IMR-90 (cell line): ENCODE measurements at regions of chr7 and their contacts with region 1.

Region 1: GRCh38 chr7:33109005-33109757 is at the start of gene RP9:
- DNase-seq: peak; percentile 47
- ATAC-seq: peak; percentile 95
- H3K4me3 ChIP-seq: peak within 1 kb of the TSS; percentile 92
- H3K27ac ChIP-seq: peak within 1 kb of the TSS; percentile 62
- H3K4me1 ChIP-seq: peaks cover 6% of the 10 kb centered on the region
- H3K27me3 ChIP-seq: peaks cover 6% of the 10 kb centered on the region; the same call in 1 of the 2 replicates
- CTCF ChIP-seq: peak; percentile 62
- POLR2A ChIP-seq: no peak
- RAD21 ChIP-seq: peak; percentile 29
- total RNA-seq, gene RP9: 9.5 and 14.7 TPM in 2 replicates

Region 2: GRCh38 chr7:32495298-32496176 is 613.6 kb before region 1 on chr7 and contains the start of gene AVL9:
- CTCF ChIA-PET with region 1: no interaction called
- POLR2A ChIA-PET with region 1: no interaction called
- dilution Hi-C with region 1: no loop called
- in situ Hi-C with region 1: no loop called
- intact Hi-C with region 1: loop called (anchors 2 kb)
- DNase-seq: peak; percentile 93
- ATAC-seq: peak; percentile 97
- H3K4me3 ChIP-seq: peak within 1 kb of the TSS; percentile 97
- H3K27ac ChIP-seq: peak within 1 kb of the TSS; percentile 98
- H3K4me1 ChIP-seq: peaks cover 2% of the 10 kb centered on the region; the same call in 1 of the 2 replicates
- H3K27me3 ChIP-seq: no peaks in the 10 kb centered on the region
- CTCF ChIP-seq: no peak
- POLR2A ChIP-seq: peak; percentile 90
- RAD21 ChIP-seq: no peak
- total RNA-seq, gene AVL9: 21.7 and 23.6 TPM in 2 replicates

Region 3: DNA sequence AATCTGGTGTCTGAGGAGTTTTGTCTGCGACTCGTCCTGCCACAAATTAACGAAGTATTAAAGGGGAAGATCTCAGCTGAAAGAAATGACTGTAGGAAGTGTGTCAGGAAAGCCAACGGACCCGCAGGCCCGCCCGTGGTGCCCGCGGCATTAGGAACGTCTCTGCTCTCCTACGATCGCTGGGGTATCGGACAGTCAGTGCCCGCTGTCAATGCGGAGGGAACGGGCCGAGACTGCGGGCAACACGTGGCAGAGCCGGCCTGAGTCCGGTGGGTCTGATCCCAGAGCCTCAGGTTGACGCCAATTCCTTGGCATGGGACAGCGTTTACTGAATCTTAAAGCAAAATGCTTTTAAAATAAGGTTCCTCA is 346.3 kb before region 1 on chr7:
- CTCF ChIA-PET with region 1: no interaction called
- POLR2A ChIA-PET with region 1: no interaction called
- dilution Hi-C with region 1: no loop called
- in situ Hi-C with region 1: no loop called
- intact Hi-C with region 1: loop called (anchors 2 kb)
- DNase-seq: no peak
- ATAC-seq: no peak
- H3K4me3 ChIP-seq: no peak overlapping the region
- H3K27ac ChIP-seq: no peak overlapping the region
- H3K4me1 ChIP-seq: no peaks in the 10 kb centered on the region; the same call in 1 of the 2 replicates
- H3K27me3 ChIP-seq: no peaks in the 10 kb centered on the region
- CTCF ChIP-seq: no peak
- POLR2A ChIP-seq: no peak
- RAD21 ChIP-seq: no peak

Region 4: GRCh38 chr7:32803406-32804141 is 305.6 kb before region 1 on chr7:
- CTCF ChIA-PET with region 1: interaction called, 4 read pairs
- POLR2A ChIA-PET with region 1: no interaction called
- dilution Hi-C with region 1: no loop called
- in situ Hi-C with region 1: no loop called
- intact Hi-C with region 1: loop called (anchors 1 kb)
- DNase-seq: no peak
- ATAC-seq: no peak
- H3K4me3 ChIP-seq: no peak overlapping the region
- H3K27ac ChIP-seq: no peak overlapping the region
- H3K4me1 ChIP-seq: no peaks in the 10 kb centered on the region
- H3K27me3 ChIP-seq: no peaks in the 10 kb centered on the region
- CTCF ChIP-seq: no peak
- POLR2A ChIP-seq: no peak
- RAD21 ChIP-seq: no peak

Region 5: GRCh38 chr7:32891800-32892520 is 217.2 kb before region 1 on chr7:
- CTCF ChIA-PET with region 1: interaction called, 4 read pairs
- POLR2A ChIA-PET with region 1: no interaction called
- dilution Hi-C with region 1: no loop called
- in situ Hi-C with region 1: no loop called
- intact Hi-C with region 1: loop called (anchors 5 kb)
- DNase-seq: peak; percentile 92
- ATAC-seq: peak; percentile 79
- H3K4me3 ChIP-seq: peak overlapping the region; percentile 86
- H3K27ac ChIP-seq: peak overlapping the region; percentile 99
- H3K4me1 ChIP-seq: peaks cover 2% of the 10 kb centered on the region; the same call in 1 of the 2 replicates
- H3K27me3 ChIP-seq: no peaks in the 10 kb centered on the region
- CTCF ChIP-seq: no peak
- POLR2A ChIP-seq: peak; percentile 39; the same call in 1 of the 2 replicates
- RAD21 ChIP-seq: no peak

Region 6: DNA sequence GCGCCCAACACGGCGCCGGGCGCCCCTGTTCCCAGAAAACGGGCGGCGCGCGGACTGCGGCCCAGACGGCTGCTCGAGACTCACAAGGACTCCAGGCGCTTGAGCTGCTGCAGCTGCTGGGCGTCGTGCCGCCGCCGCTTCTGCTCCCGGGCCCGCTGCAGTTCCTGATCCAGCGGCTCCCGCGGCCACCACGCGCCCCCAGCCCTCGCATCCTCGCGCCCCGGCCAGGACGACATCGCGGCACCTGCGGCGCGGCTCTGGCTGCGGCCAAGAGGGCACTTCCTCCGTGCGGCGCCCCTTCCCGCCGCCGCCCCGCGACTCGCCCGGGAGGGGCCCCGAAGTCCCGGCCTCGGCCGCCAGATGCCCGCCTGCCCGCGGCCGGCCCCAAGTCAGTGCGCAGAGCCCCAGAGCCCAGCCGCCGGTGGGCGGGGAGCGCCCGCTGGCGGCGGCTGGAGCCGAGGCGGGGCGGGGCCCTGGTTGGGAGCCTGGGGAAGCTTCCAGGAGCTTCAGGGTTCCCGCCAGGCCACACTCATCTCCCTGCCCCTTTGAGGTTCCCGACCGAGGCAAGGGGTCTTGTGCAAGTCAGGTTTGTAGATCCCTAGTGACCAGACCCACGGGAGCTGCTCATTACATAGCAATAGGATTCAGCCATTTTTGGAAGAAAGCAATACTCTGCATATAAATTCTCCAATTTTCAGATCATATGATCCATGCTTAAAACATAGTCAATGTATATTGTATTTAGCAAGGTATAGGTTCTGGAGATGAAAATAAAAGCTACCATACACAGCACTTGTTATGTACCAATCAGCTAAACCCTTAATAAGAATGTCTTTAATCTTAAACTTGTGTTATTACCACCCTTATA is 166.2 kb before region 1 on chr7:
- CTCF ChIA-PET with region 1: no interaction called
- POLR2A ChIA-PET with region 1: no interaction called
- dilution Hi-C with region 1: no loop called
- in situ Hi-C with region 1: no loop called
- intact Hi-C with region 1: loop called (anchors 5 kb)
- DNase-seq: peak; percentile 71
- ATAC-seq: peak; percentile 97
- H3K4me3 ChIP-seq: peak overlapping the region; percentile 94
- H3K27ac ChIP-seq: peak overlapping the region; percentile 95
- H3K4me1 ChIP-seq: peaks cover under 1% of the 10 kb centered on the region; the same call in 1 of the 2 replicates
- H3K27me3 ChIP-seq: no peaks in the 10 kb centered on the region
- CTCF ChIP-seq: peak; percentile 70
- POLR2A ChIP-seq: no peak; the same call in 1 of the 2 replicates
- RAD21 ChIP-seq: peak; percentile 69

Region 7: GRCh38 chr7:32957326-32958045 is 151.7 kb before region 1 on chr7 and contains the start of gene FKBP9:
- CTCF ChIA-PET with region 1: no interaction called
- POLR2A ChIA-PET with region 1: no interaction called
- dilution Hi-C with region 1: no loop called
- in situ Hi-C with region 1: no loop called
- intact Hi-C with region 1: loop called (anchors 5 kb)
- DNase-seq: peak; percentile 79
- ATAC-seq: peak; percentile 94
- H3K4me3 ChIP-seq: peak within 1 kb of the TSS; percentile 61
- H3K27ac ChIP-seq: peak within 1 kb of the TSS; percentile 92
- H3K4me1 ChIP-seq: peaks cover 5% of the 10 kb centered on the region
- H3K27me3 ChIP-seq: no peaks in the 10 kb centered on the region
- CTCF ChIP-seq: no peak
- POLR2A ChIP-seq: peak; percentile 38
- RAD21 ChIP-seq: no peak
- total RNA-seq, gene FKBP9: 146 and 191 TPM in 2 replicates

Region 8: DNA sequence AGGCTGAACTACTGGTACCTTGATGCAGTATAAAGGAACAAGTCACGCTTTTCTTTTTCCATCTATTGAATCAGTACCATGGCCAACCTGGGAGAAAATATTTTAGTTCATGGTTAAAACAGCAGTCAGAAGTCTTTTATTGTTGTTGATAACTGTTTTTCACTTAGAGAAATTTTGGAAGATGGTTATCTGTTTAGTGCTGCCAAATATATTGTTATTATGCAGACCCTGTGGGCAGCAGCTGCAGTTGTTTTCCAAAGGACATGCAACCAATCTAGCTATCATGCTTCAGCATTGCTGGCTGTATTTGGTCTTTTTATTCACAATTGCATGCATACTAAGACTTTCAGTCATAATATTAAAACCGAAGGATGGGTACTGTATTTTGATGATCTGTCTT is 189.7 kb after region 1 on chr7:
- CTCF ChIA-PET with region 1: no interaction called
- POLR2A ChIA-PET with region 1: no interaction called
- dilution Hi-C with region 1: no loop called
- in situ Hi-C with region 1: no loop called
- intact Hi-C with region 1: no loop called
- DNase-seq: no peak
- ATAC-seq: no peak
- H3K4me3 ChIP-seq: no peak overlapping the region
- H3K27ac ChIP-seq: no peak overlapping the region
- H3K4me1 ChIP-seq: no peaks in the 10 kb centered on the region
- H3K27me3 ChIP-seq: no peaks in the 10 kb centered on the region
- CTCF ChIP-seq: no peak
- POLR2A ChIP-seq: no peak
- RAD21 ChIP-seq: no peak